ENCODE measurements at regions of chr2 and their contacts with region 1.

Region 1: DNA sequence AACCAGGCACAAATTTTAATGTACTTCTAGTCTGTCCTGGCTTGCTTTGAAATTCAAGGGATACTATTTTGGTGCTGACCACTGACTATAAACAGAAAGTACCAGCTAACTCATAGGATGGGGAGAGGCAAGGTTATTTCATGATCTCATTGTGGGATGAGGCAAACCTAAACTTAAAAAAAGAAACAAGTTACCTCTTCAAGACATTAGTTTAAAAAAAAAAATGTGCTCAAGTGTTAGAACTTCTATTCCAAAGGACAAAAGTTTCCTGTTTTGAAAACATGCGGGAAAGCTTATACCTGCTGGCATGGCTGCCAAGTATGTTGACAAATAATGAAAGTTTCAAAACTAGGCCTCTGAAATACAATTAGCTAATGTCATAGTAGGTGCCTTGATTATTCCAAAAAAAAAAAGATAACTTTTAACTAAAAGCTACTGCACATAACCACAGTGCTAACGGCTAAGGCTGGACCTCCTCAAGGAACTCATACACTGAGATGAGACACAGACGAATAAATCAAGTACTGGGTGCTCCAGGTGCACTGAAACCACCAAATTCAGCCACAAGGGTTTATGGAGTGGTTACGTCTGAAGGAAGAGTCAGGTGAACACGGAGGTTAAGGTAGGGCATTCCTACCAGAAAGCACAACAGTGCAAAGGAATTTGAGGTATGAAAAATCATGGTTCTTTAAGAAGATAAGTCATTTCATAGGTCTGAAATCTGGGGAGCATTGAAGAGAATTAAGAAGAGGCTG is 38.1 kb downstream of the TMEM131 start:
- DNase-seq: no peak
- ATAC-seq: no peak
- H3K4me3 ChIP-seq: no peak overlapping the region
- H3K27ac ChIP-seq: no peak overlapping the region
- H3K4me1 ChIP-seq: peaks cover 9% of the 10 kb centered on the region; the same call in 1 of the 2 replicates
- H3K27me3 ChIP-seq: no peaks in the 10 kb centered on the region
- CTCF ChIP-seq: no peak
- EP300 ChIP-seq: no peak
- POLR2A ChIP-seq: no peak
- RAD21 ChIP-seq: no peak

Region 2: DNA sequence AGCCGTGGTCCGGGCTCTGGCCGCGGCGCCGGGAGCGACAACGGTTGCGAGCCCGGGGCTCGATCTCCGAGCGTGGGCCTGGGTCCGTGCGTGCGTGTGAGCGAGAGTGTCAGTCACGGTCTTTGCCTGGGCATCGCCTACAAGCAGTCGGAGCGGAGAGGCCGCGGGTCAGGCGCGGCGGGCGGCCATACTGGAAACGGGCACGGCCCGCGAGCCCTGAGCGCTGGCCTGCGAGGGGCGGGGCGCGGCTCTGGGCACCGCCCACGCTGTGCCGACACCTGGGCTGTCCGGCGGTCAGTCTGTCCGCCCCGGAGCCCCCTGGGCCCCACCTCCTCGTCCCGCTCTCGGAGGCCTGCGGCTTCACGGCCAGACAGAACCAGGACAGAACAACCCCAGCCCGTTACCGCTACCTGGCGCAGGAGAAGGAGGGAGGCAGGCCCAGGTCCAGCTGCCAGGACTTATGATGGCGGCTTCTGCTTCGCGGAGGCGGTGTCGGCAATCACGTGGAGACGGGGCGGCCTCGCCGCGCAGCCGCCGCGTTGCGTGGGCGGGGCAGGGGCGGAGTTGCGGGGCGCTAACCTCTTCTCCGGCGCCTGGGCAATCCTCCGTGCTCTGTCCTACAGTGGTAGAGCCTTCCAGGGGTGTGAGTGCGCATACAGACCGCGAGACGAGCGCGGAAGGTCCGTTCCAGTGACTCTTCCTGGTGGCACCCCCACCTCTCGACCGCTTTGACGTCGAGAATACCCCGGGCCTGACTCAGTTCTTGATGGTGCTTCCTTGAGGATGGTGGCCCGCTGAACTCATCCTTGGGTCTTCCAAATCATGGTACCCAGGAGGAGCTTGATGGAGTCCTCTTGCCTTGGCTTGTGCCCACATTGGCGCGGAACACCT is 38.4 kb after region 1 on chr2 and contains the start of gene TMEM131:
- CTCF ChIA-PET with region 1: no interaction called
- POLR2A ChIA-PET with region 1: no interaction called
- in situ Hi-C with region 1: no loop called
- intact Hi-C with region 1: loop called (anchors 5 kb)
- DNase-seq: peak; percentile 88
- ATAC-seq: peak; percentile 93
- H3K4me3 ChIP-seq: peak within 1 kb of the TSS; percentile 86 to 100 (median 98)
- H3K27ac ChIP-seq: peak within 1 kb of the TSS; percentile 96
- H3K4me1 ChIP-seq: peaks cover 70% of the 10 kb centered on the region
- H3K27me3 ChIP-seq: no peaks in the 10 kb centered on the region; a peak in 1 of 5 replicates
- CTCF ChIP-seq: no peak; the same call in 1 of the 2 replicates
- EP300 ChIP-seq: peak in 1 of 2 experiments; percentile 3; a peak in 1 of 4 replicates
- POLR2A ChIP-seq: peak; percentile 81 to 90
- RAD21 ChIP-seq: 0 out of 2 replicates have a peak, but pooled peaks have one; percentile 17
- total RNA-seq, gene TMEM131: 17.4 and 19.5 TPM in 2 replicates

Region 3: GRCh38 chr2:98012561-98012991 is 55.0 kb after region 1 on chr2:
- CTCF ChIA-PET with region 1: no interaction called
- POLR2A ChIA-PET with region 1: no interaction called
- in situ Hi-C with region 1: no loop called
- intact Hi-C with region 1: no loop called
- DNase-seq: no peak
- ATAC-seq: no peak
- H3K4me3 ChIP-seq: no peak overlapping the region
- H3K27ac ChIP-seq: no peak overlapping the region
- H3K4me1 ChIP-seq: peaks cover 20% of the 10 kb centered on the region
- H3K27me3 ChIP-seq: no peaks in the 10 kb centered on the region
- CTCF ChIP-seq: no peak
- EP300 ChIP-seq: no peak
- POLR2A ChIP-seq: no peak
- RAD21 ChIP-seq: no peak